Astrocyte of the cerebellum (primary cell): ENCODE measurements at regions of chr17 and their contacts with region 1.

Region 1: GRCh38 chr17:33292184-33292980 is 713 bp downstream of the ASIC2 start:
- DNase-seq: no peak
- H3K4me3 ChIP-seq: peak overlapping the region; percentile 34
- CTCF ChIP-seq: peak; percentile 31

Region 2: DNA sequence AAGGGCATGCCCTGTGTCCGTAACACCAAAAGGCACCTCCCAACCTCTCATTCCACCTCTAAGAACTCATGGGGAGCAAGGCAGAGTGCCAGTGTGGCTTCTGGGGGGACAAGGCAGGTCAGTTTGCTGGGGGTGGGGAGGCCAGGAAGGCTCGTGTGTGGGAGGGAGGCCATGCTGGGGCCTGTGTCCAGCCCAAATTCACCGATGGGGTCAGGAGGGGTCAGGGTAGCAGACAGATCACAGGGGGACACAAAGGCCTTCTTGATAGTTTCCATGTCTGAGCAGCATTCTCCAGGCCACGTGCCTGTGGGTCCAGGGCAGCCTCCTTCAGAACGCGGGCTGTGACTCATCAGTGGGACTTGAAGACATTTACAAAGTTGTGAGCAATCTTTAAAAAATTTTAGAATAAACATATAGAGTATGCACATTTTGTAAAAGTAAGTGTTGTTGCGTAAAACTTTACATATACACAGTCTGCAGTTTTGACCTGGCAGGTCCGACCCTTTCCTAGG is 279.8 kb before region 1 on chr17:
- in situ Hi-C with region 1: loop called (anchors 10 kb)
- DNase-seq: peak; percentile 62
- H3K4me3 ChIP-seq: no peak overlapping the region
- CTCF ChIP-seq: no peak

Region 3: DNA sequence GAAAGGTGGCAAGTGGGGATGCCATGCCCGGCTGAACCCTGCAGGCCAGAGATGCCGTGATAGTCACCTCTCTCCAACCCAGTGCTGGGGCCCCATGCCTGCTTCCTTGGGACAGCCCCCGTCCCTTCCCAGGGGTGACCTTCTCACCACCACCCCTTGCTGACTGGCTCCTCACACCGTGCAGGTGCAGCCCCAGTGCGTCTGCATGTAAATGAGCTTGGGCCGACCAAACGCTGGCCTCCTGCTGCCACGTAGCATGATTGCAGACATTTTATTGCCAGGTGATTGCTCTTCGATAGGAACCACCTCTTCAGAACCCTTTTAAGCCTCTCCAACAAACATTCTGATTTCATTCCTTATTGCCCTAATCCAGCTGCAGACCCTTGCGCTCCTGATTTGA is 31.7 kb before region 1 on chr17:
- in situ Hi-C with region 1: no loop called
- DNase-seq: no peak
- H3K4me3 ChIP-seq: no peak overlapping the region
- CTCF ChIP-seq: no peak

Region 4: GRCh38 chr17:33352526-33352925 is 60.1 kb after region 1 on chr17:
- in situ Hi-C with region 1: no loop called
- DNase-seq: no peak
- H3K4me3 ChIP-seq: no peak overlapping the region
- CTCF ChIP-seq: no peak